GM13977 (cell line): ENCODE measurements at regions of chr4 and their contacts with region 1.

Region 1: DNA sequence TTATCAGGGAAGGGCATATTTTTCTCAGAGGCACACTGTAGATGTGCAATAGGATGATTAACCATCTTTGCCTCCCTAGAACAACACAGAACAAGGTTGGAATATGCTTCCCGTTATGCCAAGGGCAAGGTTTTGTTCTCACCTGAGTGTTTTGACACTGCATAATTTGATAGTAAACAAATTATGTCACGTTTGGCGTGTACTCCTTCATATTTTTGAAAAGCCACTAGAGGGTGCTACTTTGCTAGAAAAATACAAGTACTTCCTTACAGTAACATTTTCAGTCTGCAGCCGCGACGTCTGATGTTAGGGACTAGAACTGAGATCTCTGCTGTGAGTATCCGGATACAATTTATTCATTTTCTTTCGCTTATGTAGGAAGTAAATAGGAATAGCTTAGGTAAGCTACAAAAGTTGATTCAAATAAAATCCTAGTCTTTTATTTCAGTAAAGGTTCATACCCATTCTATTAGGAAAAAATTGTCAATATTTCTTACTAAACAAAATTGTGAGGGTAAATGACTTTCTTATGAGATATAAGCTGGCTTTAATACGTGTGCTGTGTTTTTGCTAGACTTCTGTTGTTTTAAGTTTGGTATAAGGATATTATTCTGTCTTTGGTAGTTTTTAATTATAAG is 181.1 kb upstream of the WDFY3 start:
- DNase-seq: peak; percentile 54
- CTCF ChIP-seq: peak; percentile 53

Region 2: GRCh38 chr4:84632092-84632491 is 515.5 kb before region 1 on chr4:
- in situ Hi-C with region 1: no loop called
- DNase-seq: no peak
- CTCF ChIP-seq: no peak

Region 3: GRCh38 chr4:85756938-85757337 is 609.4 kb after region 1 on chr4:
- in situ Hi-C with region 1: loop called (anchors 25 kb)
- DNase-seq: peak; percentile 11
- CTCF ChIP-seq: peak; percentile 65